ENCODE measurements at regions of chr9 and their contacts with region 1.

Region 1: DNA sequence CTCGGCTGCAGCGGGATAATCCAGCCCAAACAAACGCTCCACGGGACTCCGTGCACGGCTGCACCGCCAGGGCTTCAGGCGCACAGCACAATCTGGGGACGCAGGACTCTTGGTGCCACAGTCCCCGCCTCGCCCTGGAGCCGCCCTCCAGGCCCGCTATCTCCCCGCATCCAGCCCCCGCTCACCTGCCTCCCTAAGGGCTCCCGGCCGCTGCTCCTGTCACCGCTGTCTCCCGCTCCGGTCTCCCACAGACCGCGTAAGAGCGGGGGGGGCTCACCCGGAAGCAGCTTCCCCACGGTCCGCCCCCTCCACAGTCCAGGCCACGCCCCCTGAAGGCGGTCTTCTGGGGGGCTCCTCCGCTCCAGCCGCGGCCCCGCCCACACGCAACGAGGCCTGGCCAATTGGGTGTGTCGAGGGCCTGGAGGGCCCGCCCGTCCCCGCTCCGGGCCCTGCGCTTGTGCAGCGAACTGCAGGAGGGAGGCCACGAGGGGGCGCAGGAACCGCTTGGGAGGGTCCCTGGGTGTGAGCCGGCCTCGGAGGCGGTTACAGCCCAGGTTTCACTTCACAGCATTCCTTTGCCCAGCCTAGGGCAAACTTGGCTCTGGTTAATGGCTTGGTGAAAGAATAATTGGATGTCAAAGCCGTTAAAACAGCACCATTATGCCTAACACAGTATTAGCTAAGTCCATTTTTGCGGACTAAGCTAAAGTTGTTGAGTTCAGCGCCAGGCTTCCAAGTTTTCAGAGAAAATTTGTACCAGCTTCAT is at the start of gene ALAD:
- DNase-seq: peak; percentile 100
- total RNA-seq, gene ALAD: 68.2 TPM

Region 2: GRCh38 chr9:113196967-113197366 is 204.2 kb before region 1 on chr9:
- intact Hi-C with region 1: no loop called
- DNase-seq: no peak

Region 3: DNA sequence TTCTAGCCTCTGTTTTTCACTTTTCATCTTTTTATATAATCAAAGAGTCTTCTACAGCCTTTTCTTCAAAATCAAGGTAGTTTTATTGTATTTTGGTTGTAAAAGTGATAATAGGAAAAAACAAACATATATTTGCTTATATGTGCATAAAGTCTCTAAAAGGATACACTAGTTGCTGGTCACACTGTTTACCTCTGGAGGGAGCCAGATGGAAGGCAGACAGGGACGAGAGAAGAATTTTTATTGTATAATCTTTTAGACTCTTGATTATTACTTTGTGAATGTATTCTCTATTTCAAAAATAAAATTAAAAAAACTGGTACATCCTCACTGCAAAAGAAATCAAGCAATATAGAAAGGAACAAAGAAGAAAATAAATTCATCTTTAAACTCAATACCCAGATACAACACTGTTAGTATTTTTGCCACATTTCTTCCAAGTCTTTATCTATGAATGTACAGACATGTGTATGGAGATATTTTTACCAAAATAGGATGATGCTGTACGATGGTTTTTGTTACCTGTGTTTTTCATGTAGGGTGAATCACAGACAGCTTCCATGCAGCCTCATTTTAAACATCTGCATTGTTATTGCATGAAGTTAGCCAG is 91.9 kb before region 1 on chr9:
- intact Hi-C with region 1: loop called (anchors 2 kb)
- DNase-seq: no peak

Region 4: DNA sequence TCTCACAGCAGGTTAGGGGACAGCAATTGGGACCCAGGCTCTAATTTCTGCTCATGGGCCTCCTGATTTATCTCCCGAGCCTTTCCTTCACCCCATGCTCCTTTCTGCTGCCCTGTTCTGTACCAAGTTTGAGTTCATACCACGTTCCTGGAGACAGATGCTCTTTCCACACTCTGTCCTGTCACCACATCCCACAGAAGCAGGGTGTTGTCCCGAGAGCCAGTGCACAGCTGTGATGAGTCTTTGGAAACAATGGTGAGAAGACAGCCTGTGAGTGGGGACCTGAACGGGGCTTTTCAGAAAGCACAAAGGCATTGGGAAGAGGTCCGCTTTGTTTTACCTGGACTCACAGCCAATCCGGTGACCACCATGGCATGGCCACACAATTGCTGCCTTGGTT is 78.5 kb before region 1 on chr9:
- intact Hi-C with region 1: no loop called
- DNase-seq: no peak

Region 5: GRCh38 chr9:113340017-113340699 is 61.1 kb before region 1 on chr9 and contains the start of gene WDR31:
- intact Hi-C with region 1: loop called (anchors 2 kb)
- DNase-seq: peak; percentile 96
- total RNA-seq, gene WDR31: 10.9 TPM

Measured in cardiac septum (tissue), 1 donor.